PC-9 (cell line): ENCODE measurements at regions of chr2 and their contacts with region 1.

Region 1: DNA sequence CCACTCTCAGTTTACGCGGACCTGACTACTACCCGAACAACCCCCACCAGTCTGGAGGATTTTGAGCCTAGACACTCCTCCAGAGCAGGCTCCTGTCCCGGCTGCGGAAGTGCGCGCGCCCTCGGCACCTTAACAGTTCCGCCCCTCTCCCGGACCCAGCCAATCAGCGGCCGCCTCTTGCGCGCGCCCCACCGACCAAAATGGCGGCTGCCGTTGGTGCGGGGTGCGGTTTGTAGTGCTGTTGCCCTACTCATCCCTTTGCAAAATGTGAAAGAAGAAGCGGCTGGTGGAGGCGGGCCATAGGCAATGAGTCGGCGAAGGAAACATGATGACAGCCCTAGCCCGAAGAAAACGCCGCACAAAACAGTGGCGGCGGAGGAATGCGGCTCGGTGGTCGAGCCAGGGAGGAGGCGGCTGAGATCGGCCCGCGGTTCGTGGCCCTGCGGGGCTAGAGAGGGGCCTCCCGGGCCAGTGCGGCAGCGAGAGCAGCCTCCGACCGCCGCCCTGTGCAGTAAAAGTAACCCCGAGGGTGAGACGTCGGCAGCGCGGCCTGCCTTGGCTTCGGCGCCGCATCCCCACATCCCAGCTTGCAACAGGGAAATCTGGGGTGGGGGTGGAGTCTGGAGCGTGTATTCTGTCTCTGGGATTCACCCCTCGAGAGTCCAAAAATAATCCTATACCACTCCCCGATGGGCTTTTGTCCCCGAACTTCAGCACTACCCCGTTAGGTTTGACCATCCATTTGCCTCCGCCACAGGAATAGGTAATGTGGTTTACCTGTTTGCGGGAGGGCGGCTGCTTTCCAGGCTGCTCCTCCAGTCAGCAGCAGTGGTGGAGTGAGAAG is at the start of gene ETAA1:
- DNase-seq: peak; percentile 75 to 90
- H3K4me3 ChIP-seq: peak within 1 kb of the TSS; percentile 78
- H3K27ac ChIP-seq: peak within 1 kb of the TSS; percentile 57
- H3K4me1 ChIP-seq: peaks cover 34% of the 10 kb centered on the region
- H3K27me3 ChIP-seq: no peaks in the 10 kb centered on the region
- CTCF ChIP-seq: no peak
- total RNA-seq, gene ETAA1: 17.1 and 25.3 TPM in 2 replicates

Region 2: GRCh38 chr2:67259581-67260342 is 137.6 kb before region 1 on chr2:
- CTCF ChIA-PET with region 1: no interaction called
- POLR2A ChIA-PET with region 1: no interaction called
- intact Hi-C with region 1: loop called (anchors 1 kb)
- DNase-seq: peak; percentile 45 to 87
- H3K4me3 ChIP-seq: no peak overlapping the region
- H3K27ac ChIP-seq: peak overlapping the region; percentile 63
- H3K4me1 ChIP-seq: peaks cover 43% of the 10 kb centered on the region
- H3K27me3 ChIP-seq: no peaks in the 10 kb centered on the region
- CTCF ChIP-seq: no peak

Region 3: DNA sequence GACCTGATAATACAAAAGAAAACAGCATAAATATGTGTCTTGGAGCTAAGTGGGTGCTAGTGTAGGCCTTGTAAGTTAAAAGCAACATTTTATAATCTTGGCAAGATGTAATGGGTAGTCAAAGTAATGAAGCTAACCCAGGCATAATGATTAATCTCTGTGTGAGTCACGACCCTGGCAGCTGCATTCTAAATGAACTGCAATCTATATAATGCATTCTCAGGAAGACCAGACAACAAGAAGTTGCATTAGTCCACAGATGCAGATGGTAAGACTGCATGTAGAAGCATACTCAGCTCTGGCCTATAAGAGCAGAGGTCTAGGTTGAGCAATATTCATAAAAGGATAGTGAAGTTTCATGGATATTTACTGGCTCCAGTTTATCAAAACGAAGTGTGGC is 85.8 kb before region 1 on chr2:
- CTCF ChIA-PET with region 1: no interaction called
- POLR2A ChIA-PET with region 1: no interaction called
- intact Hi-C with region 1: no loop called
- DNase-seq: peak in 1 of 2 experiments; percentile 59
- H3K4me3 ChIP-seq: no peak overlapping the region
- H3K27ac ChIP-seq: no peak overlapping the region
- H3K4me1 ChIP-seq: peaks cover 12% of the 10 kb centered on the region; the same call in 1 of the 2 replicates
- H3K27me3 ChIP-seq: no peaks in the 10 kb centered on the region
- CTCF ChIP-seq: no peak

Region 4: DNA sequence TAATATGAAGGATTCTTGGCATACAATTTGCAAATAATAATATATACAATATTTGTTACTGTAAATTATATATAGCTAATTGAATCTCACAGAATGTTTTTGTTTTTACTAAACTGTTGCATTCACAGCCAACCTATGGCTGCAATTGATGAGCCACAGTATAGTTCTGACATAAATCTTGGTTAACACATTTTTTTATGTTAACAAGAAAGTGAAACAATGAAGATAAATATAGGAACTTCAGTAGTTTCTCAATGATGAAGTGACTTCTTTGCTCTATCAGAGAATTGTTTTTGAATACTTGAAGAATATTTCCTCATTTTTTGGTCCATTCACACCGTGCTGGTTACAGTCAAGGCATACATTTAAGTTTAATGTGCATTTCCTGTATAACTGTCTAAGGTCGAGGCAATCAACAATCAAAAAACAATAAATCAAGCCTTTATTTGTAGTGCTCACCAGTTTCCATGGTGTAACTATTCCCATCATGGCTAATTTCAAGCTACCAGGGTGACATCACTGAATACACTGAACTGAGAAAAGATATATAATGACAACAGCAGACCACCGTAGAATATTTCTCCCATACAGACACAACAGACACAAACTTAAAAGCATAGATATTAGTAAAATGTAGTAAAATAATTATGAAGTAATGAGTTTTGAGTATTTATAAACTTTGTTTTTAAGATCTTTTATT is 13.1 kb before region 1 on chr2:
- CTCF ChIA-PET with region 1: no interaction called
- POLR2A ChIA-PET with region 1: no interaction called
- intact Hi-C with region 1: no loop called
- DNase-seq: no peak
- H3K4me3 ChIP-seq: no peak overlapping the region
- H3K27ac ChIP-seq: no peak overlapping the region
- H3K4me1 ChIP-seq: no peaks in the 10 kb centered on the region
- H3K27me3 ChIP-seq: no peaks in the 10 kb centered on the region
- CTCF ChIP-seq: no peak

Region 5: GRCh38 chr2:67437174-67437573 is 39.8 kb after region 1 on chr2:
- CTCF ChIA-PET with region 1: no interaction called
- POLR2A ChIA-PET with region 1: no interaction called
- intact Hi-C with region 1: loop called (anchors 2 kb)
- DNase-seq: peak in 1 of 2 experiments; percentile 91
- H3K4me3 ChIP-seq: no peak overlapping the region
- H3K27ac ChIP-seq: no peak overlapping the region
- H3K4me1 ChIP-seq: peaks cover 16% of the 10 kb centered on the region
- H3K27me3 ChIP-seq: no peaks in the 10 kb centered on the region
- CTCF ChIP-seq: no peak